HepG2 (cell line): ENCODE measurements at regions of chr16 and their contacts with region 1.

Region 1: GRCh38 chr16:87316923-87317749 is at the start of gene C16orf95:
- DNase-seq: peak; percentile 95
- ATAC-seq: peak; percentile 89
- H3K4me3 ChIP-seq: peak within 1 kb of the TSS; percentile 81 to 98 (median 93)
- H3K27ac ChIP-seq: peak within 1 kb of the TSS; percentile 91
- H3K4me1 ChIP-seq: peaks cover 25% of the 10 kb centered on the region
- H3K27me3 ChIP-seq: no peaks in the 10 kb centered on the region; a peak in 1 of 5 replicates
- CTCF ChIP-seq: peak; percentile 93
- EP300 ChIP-seq: no peak
- POLR2A ChIP-seq: peak; percentile 81 to 82
- RAD21 ChIP-seq: peak; percentile 79
- total RNA-seq, gene C16orf95: 7.2 and 8.6 TPM in 2 replicates

Region 2: DNA sequence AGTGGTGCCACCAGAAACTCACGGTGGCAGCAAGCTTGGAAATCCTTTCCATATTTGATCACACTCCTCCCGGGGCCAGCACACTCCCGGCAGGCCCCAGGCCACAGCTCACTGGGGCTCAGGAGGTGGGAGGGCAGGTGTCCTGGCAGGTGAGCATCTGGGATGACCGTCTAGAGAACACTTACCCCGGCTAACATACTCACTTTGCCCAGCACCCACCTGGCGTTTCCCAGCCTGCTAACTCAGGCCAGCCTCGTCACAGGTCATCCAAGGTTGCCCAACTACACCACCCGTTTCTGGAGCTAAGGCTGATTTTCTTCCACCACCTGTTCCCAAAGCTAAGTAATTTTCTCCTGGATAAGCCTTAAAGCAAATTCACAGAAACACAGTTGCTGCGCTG is 41.6 kb after region 1 on chr16:
- CTCF ChIA-PET with region 1: no interaction called
- POLR2A ChIA-PET with region 1: interaction called, 4 read pairs
- in situ Hi-C with region 1: no loop called
- intact Hi-C with region 1: loop called (anchors 5 kb)
- DNase-seq: no peak
- ATAC-seq: no peak
- H3K4me3 ChIP-seq: no peak overlapping the region
- H3K27ac ChIP-seq: no peak overlapping the region
- H3K4me1 ChIP-seq: peaks cover 70% of the 10 kb centered on the region
- H3K27me3 ChIP-seq: no peaks in the 10 kb centered on the region
- CTCF ChIP-seq: no peak
- EP300 ChIP-seq: no peak
- POLR2A ChIP-seq: no peak
- RAD21 ChIP-seq: no peak